Activated B cell treated with CpG ODN at 0.5 μM for 24 hours (primary cell): ENCODE measurements at regions of chr4 and their contacts with region 1.

Region 1: DNA sequence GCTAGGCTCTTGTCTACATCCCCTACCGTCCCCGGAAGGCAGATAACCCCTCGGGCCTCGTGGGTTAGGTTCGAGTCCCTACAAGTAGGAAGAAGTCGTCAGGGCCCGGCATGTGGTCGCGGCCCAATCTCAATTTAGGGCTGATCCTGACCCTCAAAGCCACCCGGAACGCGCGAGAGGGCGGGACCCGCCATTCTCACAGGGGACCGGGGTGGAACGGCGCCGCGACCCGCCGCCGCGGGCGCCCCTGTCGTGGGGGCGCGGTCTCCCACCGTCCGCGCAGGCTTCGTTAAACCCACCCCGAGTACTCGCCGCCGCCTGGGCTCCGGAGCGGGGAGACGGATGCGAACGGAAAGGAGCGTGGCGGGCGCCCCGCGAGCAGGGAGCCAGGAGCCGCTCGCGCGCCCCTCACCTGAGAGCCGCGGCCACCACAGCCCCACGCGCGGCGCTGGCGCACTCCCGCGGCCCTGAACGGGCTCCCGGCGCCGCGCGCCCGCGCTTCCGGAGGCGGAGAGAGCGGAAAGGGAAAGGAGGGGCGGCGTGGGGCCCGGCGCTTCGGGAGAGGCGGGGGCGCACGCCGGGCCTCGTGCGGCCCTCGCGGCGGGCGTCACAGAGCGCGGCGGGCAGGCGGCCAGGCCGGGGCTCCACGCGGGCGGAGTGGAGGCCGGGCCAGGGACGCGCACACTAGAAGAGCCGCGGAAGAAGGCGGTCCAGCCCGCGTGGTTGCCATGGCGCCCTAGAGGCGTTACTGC is at the start of gene CFAP97:
- DNase-seq: peak; percentile 82
- ATAC-seq: peak; percentile 81
- H3K4me3 Mint-ChIP-seq: peak within 1 kb of the TSS; percentile 93
- H3K27ac Mint-ChIP-seq: peak within 1 kb of the TSS; percentile 97
- H3K4me1 Mint-ChIP-seq: peaks cover 47% of the 10 kb centered on the region
- H3K27me3 Mint-ChIP-seq: no peaks in the 10 kb centered on the region
- CTCF ChIP-seq: no peak
- total RNA-seq, gene CFAP97: 42.6 and 44.1 TPM in 2 replicates

Region 2: GRCh38 chr4:185192059-185192458 is 11.6 kb before region 1 on chr4:
- CTCF ChIA-PET with region 1: no interaction called
- POLR2A ChIA-PET with region 1: no interaction called
- intact Hi-C with region 1: loop called (anchors 1 kb)
- DNase-seq: no peak
- ATAC-seq: peak; percentile 61
- H3K4me3 Mint-ChIP-seq: peak overlapping the region; percentile 3
- H3K27ac Mint-ChIP-seq: peak overlapping the region; percentile 13
- H3K4me1 Mint-ChIP-seq: peaks cover 35% of the 10 kb centered on the region
- H3K27me3 Mint-ChIP-seq: no peaks in the 10 kb centered on the region
- CTCF ChIP-seq: no peak

Region 3: DNA sequence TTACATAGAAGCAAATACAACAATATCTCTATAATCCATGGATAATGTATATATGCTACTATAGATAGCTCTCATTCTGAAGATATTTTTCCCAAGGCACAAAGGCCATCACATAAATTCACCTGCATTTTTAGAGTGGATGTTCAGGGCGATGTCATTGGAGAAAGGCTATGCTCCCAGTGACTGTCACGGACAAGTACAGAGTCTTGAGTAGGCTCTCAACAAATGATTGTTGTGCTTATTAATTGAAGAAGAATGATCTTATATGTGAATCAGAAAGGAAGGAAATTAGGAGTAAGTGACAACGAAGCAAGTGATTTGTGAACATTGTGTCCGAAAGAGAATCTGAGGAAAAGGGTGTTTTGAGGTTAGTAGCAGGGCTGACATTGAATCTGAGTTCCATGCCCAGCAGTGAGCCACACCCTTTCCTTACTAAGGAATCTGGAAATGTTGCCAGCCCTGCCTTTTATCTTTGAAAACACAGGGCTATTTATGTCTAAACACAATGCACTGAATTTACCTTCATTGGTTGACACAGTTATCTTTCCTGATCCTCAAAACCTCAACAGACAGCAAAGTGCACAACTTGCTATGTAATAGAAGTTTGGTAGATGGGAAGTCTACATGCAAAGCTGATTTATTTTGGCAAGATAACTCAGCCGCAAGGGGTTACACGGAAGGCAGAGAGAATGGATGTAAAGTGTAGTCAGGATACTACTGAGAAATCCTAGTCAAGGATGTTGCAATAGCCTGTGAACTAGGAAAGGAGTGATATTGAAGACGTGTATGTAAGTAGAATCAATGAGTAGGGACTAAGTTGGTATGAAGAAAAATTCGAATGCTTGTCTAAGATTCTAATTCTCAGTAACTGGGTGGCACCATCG is 557.9 kb after region 1 on chr4:
- CTCF ChIA-PET with region 1: no interaction called
- POLR2A ChIA-PET with region 1: no interaction called
- intact Hi-C with region 1: no loop called
- DNase-seq: no peak
- ATAC-seq: no peak
- H3K4me3 Mint-ChIP-seq: no peak overlapping the region
- H3K27ac Mint-ChIP-seq: no peak overlapping the region
- H3K4me1 Mint-ChIP-seq: no peaks in the 10 kb centered on the region
- H3K27me3 Mint-ChIP-seq: peaks cover 10% of the 10 kb centered on the region
- CTCF ChIP-seq: no peak